H1 (cell line): ENCODE measurements at regions of chr10 and their contacts with region 1.

Region 1: GRCh38 chr10:101602761-101603398 is 14.8 kb downstream of the DPCD start:
- DNase-seq: peak; percentile 81 to 94
- H3K4me3 ChIP-seq: no peak overlapping the region
- H3K27ac ChIP-seq: no peak overlapping the region
- H3K4me1 ChIP-seq: peaks cover 2 to 9% (median 3%) of the 10 kb centered on the region in 4 experiments; a peak in 4 of 7 replicates
- H3K27me3 ChIP-seq: no peaks in the 10 kb centered on the region
- CTCF ChIP-seq: peak; percentile 93 to 100 (median 97)
- EP300 ChIP-seq: no peak
- POLR2A ChIP-seq: no peak
- RAD21 ChIP-seq: peak; percentile 98

Region 2: DNA sequence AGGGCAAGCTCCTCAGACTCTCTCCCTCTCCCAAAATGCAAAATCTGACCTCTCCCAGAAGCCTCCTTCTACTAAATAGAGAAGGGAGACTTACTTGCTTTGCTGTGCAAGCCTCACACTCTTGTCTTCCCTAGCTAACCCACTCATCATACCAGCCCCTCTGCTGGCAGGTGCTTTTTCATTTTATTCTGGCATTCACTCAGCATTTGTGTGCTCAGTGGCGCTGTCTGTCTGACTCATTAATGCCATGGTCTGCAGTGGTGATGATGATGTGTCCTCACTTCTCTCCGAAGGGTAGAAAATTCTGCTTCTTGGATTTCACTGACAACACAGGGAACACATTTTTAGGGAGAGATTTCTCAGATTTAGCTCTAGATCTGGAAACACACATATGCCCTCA is 270.9 kb before region 1 on chr10:
- CTCF ChIA-PET with region 1: no interaction called
- POLR2A ChIA-PET with region 1: no interaction called
- DNase-seq: no peak
- H3K4me3 ChIP-seq: no peak overlapping the region
- H3K27ac ChIP-seq: no peak overlapping the region
- H3K4me1 ChIP-seq: peaks cover 0 to 3% (median 0%) of the 10 kb centered on the region in 4 experiments; a peak in 2 of 7 replicates
- H3K27me3 ChIP-seq: no peaks in the 10 kb centered on the region
- CTCF ChIP-seq: no peak
- EP300 ChIP-seq: no peak
- POLR2A ChIP-seq: no peak
- RAD21 ChIP-seq: no peak

Region 3: DNA sequence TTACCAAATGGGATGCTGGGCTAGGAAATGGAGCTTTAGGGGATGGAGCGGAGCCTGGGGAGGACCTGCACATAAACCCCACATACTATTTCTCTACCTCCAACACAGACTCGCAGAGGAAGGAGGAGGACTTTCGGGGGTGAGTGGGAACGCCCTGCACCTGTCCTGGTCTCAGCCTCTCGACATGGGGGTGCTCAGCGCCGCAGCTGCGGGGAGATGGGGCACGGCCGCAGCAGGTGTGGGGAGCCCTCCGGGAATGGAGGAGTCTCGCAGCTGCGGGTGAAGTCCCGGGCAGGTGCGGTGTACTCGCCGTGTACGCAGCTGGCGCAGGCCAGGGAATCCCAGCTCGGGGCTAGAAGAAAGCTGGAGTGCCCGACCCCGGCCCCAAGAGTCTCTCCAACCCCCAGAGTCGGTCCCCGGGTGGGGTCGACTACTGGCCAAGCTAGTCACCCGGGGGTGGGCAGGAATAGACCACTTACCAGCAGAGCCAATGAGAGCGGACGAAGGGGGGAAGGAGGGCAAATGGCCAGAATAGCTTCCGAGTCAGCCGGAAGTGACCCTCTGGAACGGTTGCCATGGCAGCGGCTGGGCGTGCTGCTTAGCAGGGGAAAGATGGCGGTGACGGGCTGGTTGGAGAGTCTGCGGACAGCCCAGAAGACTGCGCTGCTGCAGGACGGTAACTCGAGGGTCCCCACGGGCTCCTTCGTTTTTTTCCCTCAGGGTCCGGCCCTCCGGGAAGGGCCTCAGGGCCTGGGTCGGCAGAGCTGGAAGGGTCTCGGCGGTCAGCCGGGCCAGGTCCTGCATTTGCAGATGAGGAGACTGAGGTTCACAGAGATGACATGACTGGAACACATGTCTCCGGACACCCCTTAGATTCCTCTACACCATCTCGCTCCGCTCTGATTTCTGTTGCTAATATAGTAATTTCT is 14.9 kb before region 1 on chr10 and contains the starts of genes DPCD and POLL:
- CTCF ChIA-PET with region 1: interaction called, 30 read pairs
- POLR2A ChIA-PET with region 1: interaction called, 3 read pairs
- DNase-seq: peak; percentile 75 to 95
- H3K4me3 ChIP-seq: peak within 1 kb of the TSS; percentile 83 to 96 (median 88)
- H3K27ac ChIP-seq: no peak within 1 kb of the TSS
- H3K4me1 ChIP-seq: peaks cover 0 to 5% (median 4%) of the 10 kb centered on the region in 4 experiments; a peak in 6 of 7 replicates
- H3K27me3 ChIP-seq: no peaks in the 10 kb centered on the region
- CTCF ChIP-seq: no peak
- EP300 ChIP-seq: no peak
- POLR2A ChIP-seq: peak in 1 of 2 experiments; percentile 47; a peak in 1 of 3 replicates
- RAD21 ChIP-seq: no peak
- total RNA-seq, gene DPCD: 18.8 and 21.2 TPM in 2 replicates
- total RNA-seq, gene POLL: 26.1 and 26.8 TPM in 2 replicates

Region 4: DNA sequence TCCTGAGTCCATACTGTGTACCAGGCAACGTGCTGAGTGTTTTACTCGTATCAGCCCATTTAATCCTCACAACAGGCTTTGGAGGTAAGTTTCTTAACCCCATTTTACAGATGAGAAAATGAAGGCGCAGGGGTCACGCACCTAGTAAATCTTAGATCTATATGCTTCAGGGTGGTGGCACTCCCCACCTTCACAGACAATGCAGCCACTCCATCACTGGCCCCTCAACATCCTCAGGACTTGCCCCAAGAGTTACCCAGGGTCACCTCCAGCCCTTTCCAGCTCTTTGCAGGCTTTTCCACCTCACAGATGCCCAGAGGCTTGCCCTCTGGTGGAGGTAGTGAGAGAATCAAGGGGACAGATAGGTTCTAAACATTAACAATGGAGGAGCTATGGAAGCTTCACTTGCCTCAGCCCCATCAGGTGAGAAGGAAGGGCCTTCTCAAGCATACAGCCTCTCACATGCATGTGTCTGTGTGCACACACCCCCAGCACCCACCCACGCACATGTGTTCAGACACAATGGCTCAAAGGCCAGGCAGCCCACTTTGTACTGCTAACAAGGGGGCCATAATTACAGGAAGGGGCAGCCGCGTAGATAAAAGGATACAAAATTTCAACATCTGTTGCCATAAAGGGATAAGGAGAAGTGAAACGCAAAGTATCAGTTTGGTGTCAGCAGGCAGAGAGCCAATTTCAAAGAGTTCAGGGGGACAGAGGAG is 14.4 kb after region 1 on chr10:
- CTCF ChIA-PET with region 1: interaction called, 131 read pairs
- POLR2A ChIA-PET with region 1: interaction called, 8 read pairs
- DNase-seq: no peak
- H3K4me3 ChIP-seq: no peak overlapping the region
- H3K27ac ChIP-seq: no peak overlapping the region
- H3K4me1 ChIP-seq: peaks cover 5 to 17% (median 13%) of the 10 kb centered on the region in 4 experiments
- H3K27me3 ChIP-seq: no peaks in the 10 kb centered on the region
- CTCF ChIP-seq: peak; percentile 21 to 50 (median 37)
- EP300 ChIP-seq: no peak
- POLR2A ChIP-seq: no peak
- RAD21 ChIP-seq: peak; percentile 26 to 46; a peak in 3 of 4 replicates

Region 5: DNA sequence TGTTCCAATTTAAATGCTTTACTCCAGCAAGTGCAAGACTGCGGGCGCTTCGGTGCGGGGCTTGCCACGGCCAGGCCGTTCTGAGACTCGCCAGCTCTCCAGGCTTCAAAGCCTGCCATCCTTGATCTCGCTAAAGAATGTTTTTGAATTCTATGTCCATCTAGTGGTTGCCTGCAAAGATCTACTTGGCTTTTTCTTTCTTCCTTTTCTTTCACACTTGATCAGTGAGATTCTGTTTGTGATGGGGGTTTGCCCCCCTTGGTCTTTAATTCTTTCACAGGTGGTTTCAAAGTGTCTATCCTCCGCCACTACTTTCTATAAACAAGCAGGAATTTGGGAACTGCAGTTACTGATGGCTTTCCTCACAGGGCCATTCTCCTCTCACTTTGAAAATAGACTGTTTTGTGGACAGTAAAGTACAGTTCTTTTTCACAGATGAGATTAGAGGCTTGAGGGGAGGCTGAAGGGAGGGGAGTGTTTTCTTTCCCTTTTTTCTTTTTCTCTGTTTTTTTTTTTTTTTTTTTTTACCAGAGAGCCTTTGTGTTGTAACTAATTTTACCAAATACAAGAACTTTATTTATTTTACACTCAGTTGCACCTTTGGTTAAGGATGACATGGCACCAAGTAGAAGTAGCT is 107.3 kb after region 1 on chr10:
- CTCF ChIA-PET with region 1: interaction called, 21 read pairs
- POLR2A ChIA-PET with region 1: no interaction called
- DNase-seq: no peak
- H3K4me3 ChIP-seq: no peak overlapping the region
- H3K27ac ChIP-seq: no peak overlapping the region
- H3K4me1 ChIP-seq: no peaks in the 10 kb centered on the region
- H3K27me3 ChIP-seq: no peaks in the 10 kb centered on the region
- CTCF ChIP-seq: peak in 1 of 3 experiments; percentile 16; a peak in 1 of 4 replicates
- EP300 ChIP-seq: no peak
- POLR2A ChIP-seq: no peak
- RAD21 ChIP-seq: no peak; a peak in 1 of 4 replicates

Region 6: DNA sequence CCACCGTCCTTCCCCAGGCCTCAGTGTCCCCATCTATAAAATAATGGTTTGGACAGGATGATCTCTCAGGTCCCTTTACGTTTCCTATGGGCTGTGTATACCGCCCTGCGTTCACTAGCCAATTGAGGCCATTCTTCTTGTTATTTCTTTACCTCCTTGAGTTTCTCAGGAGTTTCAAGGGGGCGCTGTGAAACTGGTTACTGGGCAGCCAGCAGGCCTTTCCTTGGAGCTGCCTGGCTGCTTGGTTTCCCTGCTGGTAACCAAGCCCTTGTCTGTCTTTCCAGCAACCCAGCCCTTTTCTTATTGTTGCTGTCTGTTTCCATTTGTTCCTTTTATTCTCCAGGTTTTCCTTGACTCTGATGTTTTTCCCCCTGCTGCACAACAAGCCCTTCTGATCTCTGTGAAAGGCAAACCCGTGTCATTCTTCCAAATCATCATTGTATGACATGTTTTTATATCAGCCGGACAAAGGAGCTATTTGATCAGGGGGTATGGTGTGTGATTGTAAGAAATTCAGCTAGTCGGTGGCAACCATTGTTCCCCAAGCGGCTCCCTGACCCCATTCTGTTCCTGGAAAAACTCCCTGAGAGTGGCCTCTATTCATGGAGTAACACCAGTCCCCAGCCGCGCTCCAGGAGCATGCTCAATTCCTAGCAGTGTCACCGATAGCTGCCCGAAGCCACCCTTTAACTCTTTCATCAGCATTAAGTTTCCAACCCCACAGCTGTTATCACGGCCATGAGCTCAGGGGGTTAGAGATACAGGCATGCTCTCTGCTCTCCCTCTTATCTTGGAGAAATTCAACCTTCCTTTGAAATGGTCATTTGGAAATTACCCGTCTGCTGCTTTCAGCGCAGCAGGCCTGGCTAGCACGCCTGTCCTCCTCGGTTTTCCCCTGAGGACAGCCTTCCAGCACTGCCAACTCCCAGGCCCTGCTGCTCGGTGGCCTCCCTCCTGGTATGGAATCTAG is 146.5 kb after region 1 on chr10:
- CTCF ChIA-PET with region 1: interaction called, 17 read pairs
- POLR2A ChIA-PET with region 1: no interaction called
- DNase-seq: peak in 1 of 2 experiments; percentile 27
- H3K4me3 ChIP-seq: no peak overlapping the region
- H3K27ac ChIP-seq: no peak overlapping the region
- H3K4me1 ChIP-seq: peaks cover 0 to 6% (median 2%) of the 10 kb centered on the region in 4 experiments; a peak in 3 of 7 replicates
- H3K27me3 ChIP-seq: peaks cover 0 to 2% (median 0%) of the 10 kb centered on the region in 4 experiments; a peak in 1 of 7 replicates
- CTCF ChIP-seq: peak; percentile 40 to 70 (median 62)
- EP300 ChIP-seq: no peak
- POLR2A ChIP-seq: no peak
- RAD21 ChIP-seq: peak; percentile 49 to 69

Region 7: DNA sequence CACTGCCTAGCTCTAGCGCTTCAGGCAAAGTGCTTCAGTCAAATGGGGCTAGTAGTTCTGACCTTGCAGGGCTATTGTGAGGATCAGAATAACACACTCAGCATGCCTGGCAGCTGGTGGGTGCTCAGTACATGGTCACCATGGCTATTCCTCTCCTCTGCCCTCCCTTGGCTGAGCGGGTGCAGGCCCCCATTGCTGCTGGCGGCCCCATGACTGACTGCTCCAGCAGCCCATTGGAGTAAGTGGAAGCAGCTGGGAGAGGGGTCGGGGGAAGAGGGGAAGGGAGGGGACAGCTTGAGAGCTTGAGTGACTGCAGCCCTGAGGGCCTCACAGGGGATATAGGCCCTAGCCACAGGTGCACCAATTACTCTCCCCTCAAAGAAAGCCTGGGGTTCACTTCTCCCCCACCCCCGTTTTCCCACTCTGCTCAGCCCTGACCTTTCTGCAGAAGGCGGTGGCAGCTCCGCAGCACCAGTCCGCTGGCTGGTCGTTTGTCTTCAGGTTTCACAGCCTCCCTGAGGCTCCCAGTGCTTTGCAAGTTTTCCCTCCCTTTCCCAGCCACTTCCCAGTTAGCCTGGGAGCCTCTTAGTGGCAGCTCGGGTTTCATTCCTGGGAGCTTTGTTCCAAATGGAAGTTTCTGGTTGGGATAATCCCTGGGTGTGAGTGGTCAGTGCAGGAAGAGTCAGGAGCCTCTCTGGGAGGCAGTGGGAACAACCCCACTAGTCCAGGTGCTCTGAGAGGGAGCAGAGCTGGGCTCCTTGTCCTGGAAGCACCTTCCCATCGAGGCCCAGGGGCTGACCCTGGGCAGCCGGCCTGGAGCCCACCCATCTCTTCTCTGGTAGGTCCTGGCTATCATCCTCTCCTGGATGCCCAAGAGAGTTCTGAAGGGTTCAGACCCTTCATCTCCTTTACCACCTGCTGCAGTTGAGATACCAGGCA is 156.7 kb after region 1 on chr10:
- CTCF ChIA-PET with region 1: interaction called, 22 read pairs
- POLR2A ChIA-PET with region 1: no interaction called
- DNase-seq: peak in 1 of 2 experiments; percentile 63
- H3K4me3 ChIP-seq: no peak overlapping the region
- H3K27ac ChIP-seq: no peak overlapping the region
- H3K4me1 ChIP-seq: peaks cover 0 to 9% (median 7%) of the 10 kb centered on the region in 4 experiments; a peak in 6 of 7 replicates
- H3K27me3 ChIP-seq: peaks cover 0 to 5% (median 4%) of the 10 kb centered on the region in 4 experiments; a peak in 3 of 7 replicates
- CTCF ChIP-seq: no peak
- EP300 ChIP-seq: no peak
- POLR2A ChIP-seq: no peak
- RAD21 ChIP-seq: no peak

Region 8: DNA sequence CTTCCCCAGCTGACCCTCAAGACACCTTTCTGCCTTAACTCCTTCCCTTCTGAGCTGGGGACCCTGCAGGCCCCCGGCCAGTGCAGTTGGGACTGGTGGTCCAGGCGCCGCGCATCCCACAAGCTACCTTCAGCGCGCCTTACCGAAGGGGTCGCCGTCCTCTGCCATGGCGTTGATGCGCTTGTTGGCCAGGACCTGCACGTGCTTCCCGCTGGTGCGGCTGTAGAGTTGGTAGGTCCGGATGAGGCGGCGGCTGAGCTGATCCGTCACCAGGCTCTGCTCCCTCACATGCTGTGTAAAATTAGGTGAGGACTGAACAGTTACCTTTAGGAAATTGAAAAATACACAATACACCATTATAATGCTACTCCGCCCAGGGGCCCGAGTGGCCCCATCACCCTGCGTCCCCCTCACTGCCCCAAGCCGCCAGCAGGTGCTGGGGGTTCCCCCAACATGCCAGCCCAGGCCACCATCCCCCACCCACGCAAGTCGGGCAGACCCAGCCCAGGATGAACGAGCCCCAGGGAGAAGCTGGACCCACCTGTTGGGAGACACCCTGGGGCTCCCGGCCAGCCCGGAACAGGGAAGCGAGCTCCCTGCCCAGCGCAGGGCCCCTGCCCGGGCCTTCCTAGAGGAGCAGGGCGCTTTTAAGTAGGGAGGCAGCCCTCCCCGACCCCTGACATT is 171.9 kb after region 1 on chr10:
- CTCF ChIA-PET with region 1: interaction called, 246 read pairs
- POLR2A ChIA-PET with region 1: no interaction called
- DNase-seq: peak in 1 of 2 experiments; percentile 79
- H3K4me3 ChIP-seq: peak overlapping the region in 3 of 4 experiments; percentile 27 to 54 (median 35); a peak in 6 of 8 replicates
- H3K27ac ChIP-seq: no peak overlapping the region
- H3K4me1 ChIP-seq: peaks cover 16 to 42% (median 28%) of the 10 kb centered on the region in 4 experiments
- H3K27me3 ChIP-seq: peaks cover 50 to 74% (median 69%) of the 10 kb centered on the region in 4 experiments
- CTCF ChIP-seq: no peak
- EP300 ChIP-seq: no peak
- POLR2A ChIP-seq: no peak
- RAD21 ChIP-seq: no peak